BJ (cell line): ENCODE measurements at regions of chr1 and their contacts with region 1.

Region 1: DNA sequence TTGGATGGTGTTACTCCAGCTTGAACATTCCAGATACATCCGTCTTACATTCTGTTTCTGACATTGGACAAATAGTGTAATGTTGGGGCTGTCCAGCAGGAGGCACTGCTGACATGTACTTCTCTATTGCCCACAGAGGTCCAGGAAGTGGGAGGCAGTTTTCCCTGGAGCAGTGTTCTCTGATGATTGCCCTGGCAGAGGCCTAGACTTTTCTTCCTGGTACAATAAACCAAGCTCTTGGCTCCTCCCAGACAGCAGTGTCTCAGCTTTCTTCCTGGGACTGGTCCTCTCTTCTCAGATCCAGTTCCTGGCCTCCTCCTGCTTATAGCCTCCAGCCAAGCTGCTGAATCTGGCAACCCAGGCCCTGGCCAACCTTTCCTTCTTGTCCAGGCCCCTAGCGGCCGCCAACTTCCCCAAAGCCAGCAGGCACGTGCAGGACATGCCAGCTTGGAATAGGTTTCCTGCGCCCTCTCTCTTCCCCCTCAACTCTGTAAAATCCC is 14.9 kb upstream of the IFNLR1 start:
- DNase-seq: peak; percentile 55
- H3K4me3 ChIP-seq: no peak overlapping the region
- H3K27me3 ChIP-seq: peaks cover 7% of the 10 kb centered on the region; the same call in 1 of the 2 replicates
- CTCF ChIP-seq: peak; percentile 78

Region 2: DNA sequence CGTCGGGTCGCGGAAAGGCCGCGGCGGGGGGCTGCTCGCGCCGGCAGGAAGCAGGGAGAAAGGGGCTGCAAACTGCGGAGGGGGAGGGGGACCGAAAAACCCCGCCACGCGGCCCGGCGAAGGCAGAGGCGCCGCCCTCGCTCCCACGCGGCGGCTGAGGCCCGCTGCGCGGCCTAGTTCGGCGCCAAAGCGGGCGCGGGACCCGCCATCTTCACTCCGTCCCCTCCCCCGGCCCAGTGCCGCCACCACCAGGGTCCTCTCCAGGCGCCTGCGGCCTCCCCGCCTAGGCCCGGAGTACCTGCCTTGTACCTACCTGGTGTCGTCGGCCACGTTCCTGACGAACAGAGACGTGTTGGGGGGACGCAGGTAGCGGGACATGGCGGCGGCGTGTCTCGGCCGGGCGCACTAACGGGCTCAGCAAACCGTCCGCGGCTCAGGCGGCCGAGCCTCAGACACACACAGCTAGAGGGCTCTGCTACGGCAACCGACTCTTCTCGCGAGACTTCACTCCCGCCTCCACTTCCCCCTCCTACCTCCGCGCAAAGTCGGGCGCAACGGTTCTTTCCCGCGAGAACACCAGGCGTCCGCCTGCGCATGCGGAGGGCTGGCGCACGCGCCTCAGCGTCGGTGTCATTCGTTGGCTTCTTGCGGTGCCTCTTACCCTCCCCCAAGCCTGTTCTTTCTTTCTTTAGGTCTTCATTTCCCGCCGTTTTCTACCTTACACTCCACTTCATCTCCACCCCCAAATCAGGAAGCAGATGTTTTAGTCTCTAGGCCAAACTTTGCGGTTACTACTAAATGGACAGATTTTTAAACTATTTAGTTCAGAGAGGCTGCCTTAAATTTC is 221.9 kb before region 1 on chr1 and contains the start of gene SRSF10:
- CTCF ChIA-PET with region 1: no interaction called
- POLR2A ChIA-PET with region 1: no interaction called
- DNase-seq: peak; percentile 88
- H3K4me3 ChIP-seq: peak within 1 kb of the TSS; percentile 96
- H3K27me3 ChIP-seq: no peaks in the 10 kb centered on the region
- CTCF ChIP-seq: peak; percentile 45
- polyA plus RNA-seq, gene SRSF10: 55.1 and 97.8 TPM in 2 replicates

Region 3: GRCh38 chr1:24157918-24158481 is 44.0 kb before region 1 on chr1:
- CTCF ChIA-PET with region 1: no interaction called
- POLR2A ChIA-PET with region 1: no interaction called
- DNase-seq: no peak
- H3K4me3 ChIP-seq: no peak overlapping the region
- H3K27me3 ChIP-seq: peaks cover 9% of the 10 kb centered on the region
- CTCF ChIP-seq: peak; percentile 31; the same call in 1 of the 2 replicates

Region 4: DNA sequence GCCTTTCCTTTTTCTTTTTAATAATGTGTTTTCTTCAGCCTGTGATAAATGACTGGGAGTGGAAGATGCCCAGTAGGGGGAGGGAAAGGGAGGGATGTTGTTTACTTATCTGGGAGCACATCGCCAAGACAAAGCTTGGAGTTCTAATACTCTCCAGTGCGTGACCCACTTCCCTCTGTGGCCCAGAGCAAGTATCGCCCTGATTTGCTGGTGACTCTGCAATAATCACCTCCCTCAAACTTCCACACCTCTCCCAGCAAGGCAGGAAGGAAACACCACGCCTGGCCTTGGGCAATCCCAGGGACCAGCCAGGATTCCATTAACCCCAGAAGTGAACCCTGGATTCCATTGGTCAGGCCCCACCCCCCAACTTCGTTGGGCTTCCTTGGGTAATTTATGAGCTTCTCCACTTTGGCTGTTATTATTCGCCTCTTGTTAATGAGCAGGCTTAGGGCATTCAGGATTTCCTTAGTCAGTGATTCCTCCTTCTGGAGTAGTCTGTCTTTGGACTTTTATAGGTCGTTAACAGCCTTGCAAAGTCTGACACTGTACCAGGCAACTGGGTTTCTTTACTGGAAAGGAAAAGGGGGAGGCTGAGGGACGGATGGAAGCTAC is 92.9 kb after region 1 on chr1:
- CTCF ChIA-PET with region 1: interaction called, 14 read pairs
- POLR2A ChIA-PET with region 1: no interaction called
- DNase-seq: peak; percentile 61
- H3K4me3 ChIP-seq: no peak overlapping the region
- H3K27me3 ChIP-seq: peaks cover 23% of the 10 kb centered on the region
- CTCF ChIP-seq: peak; percentile 18; the same call in 1 of the 2 replicates

Region 5: GRCh38 chr1:24403806-24404205 is 201.8 kb after region 1 on chr1:
- CTCF ChIA-PET with region 1: interaction called, 13 read pairs
- POLR2A ChIA-PET with region 1: no interaction called
- DNase-seq: no peak
- H3K4me3 ChIP-seq: no peak overlapping the region
- H3K27me3 ChIP-seq: no peaks in the 10 kb centered on the region
- CTCF ChIP-seq: no peak

Region 6: DNA sequence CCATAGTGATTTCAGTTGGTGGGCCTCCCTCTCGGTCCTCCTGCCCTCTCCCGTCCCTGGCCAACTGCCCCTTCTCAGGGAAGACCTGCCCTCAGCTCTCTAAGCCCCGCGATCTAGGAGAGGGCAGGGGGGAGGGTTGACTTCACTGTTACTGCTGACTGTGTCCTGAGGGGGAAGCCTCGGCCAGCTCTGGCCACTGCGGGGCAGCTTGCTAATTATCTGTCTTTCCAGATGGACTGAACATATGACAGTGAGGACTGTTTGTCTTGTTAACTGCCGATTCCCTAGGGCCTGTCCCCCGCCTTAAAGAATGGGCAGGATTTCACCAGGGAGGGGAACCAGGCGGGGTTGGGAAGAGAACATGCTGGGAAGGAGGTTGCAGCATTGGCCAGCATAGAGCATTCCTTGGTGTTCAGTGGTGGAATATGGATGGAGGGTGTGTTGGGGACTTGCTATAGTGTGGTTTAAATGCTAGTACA is 236.5 kb after region 1 on chr1:
- CTCF ChIA-PET with region 1: no interaction called
- POLR2A ChIA-PET with region 1: no interaction called
- DNase-seq: no peak
- H3K4me3 ChIP-seq: no peak overlapping the region
- H3K27me3 ChIP-seq: no peaks in the 10 kb centered on the region
- CTCF ChIP-seq: no peak

Region 7: GRCh38 chr1:24526940-24527542 is 325.1 kb after region 1 on chr1:
- CTCF ChIA-PET with region 1: interaction called, 10 read pairs
- POLR2A ChIA-PET with region 1: no interaction called
- DNase-seq: no peak
- H3K4me3 ChIP-seq: no peak overlapping the region
- H3K27me3 ChIP-seq: no peaks in the 10 kb centered on the region
- CTCF ChIP-seq: peak; percentile 51

Region 8: GRCh38 chr1:24635195-24635843 is 433.3 kb after region 1 on chr1:
- CTCF ChIA-PET with region 1: interaction called, 80 read pairs
- POLR2A ChIA-PET with region 1: no interaction called
- DNase-seq: peak; percentile 26
- H3K4me3 ChIP-seq: no peak overlapping the region
- H3K27me3 ChIP-seq: no peaks in the 10 kb centered on the region
- CTCF ChIP-seq: peak; percentile 73